Esophagus muscularis mucosa (tissue), 4 donors: ENCODE measurements at regions of chr7 and their contacts with region 1.

Region 1: GRCh38 chr7:151626422-151627115 is 106.9 kb upstream of the RHEB start:
- DNase-seq: no peak
- H3K4me3 ChIP-seq: no peak overlapping the region
- H3K27ac ChIP-seq: peak overlapping the region in 1 of 4 donors; percentile 93
- H3K4me1 ChIP-seq: peaks cover 20 to 81% (median 71%) of the 10 kb centered on the region in 4 donors
- H3K27me3 ChIP-seq: no peaks in the 10 kb centered on the region
- CTCF ChIP-seq: peak; percentile 40 to 59 (median 50)
- EP300 ChIP-seq: no peak
- POLR2A ChIP-seq: no peak

Region 2: DNA sequence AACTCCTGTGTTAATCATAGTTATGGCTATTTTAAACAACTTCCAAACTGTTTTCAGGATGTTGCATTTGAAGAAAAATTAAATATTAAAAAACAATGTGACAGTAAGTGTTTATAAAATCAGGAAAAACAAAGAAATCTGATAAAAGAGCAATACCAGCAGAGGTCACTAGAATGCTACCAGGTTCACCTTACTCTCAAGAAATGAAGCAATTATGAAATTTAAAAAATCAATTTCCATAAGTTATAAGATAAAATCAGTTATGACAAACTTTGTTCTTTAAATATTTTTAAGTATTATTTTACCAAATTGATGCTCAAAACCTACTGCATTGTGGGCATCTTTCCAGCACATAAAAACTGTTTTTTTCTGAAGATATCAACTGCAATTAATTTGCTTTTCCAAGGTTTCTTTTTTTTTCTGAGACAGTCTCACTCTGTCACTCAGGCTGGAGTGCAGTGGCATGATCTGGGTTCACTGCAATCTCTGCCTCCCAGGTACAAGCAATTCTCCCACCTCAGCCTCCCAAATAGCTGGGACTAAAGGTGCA is 56.1 kb before region 1 on chr7:
- intact Hi-C with region 1: no loop called
- DNase-seq: no peak
- H3K4me3 ChIP-seq: no peak overlapping the region
- H3K27ac ChIP-seq: no peak overlapping the region
- H3K4me1 ChIP-seq: peaks cover 5 to 24% (median 17%) of the 10 kb centered on the region in 4 donors
- H3K27me3 ChIP-seq: no peaks in the 10 kb centered on the region
- CTCF ChIP-seq: peak; percentile 37 to 50 (median 50)
- EP300 ChIP-seq: no peak
- POLR2A ChIP-seq: no peak

Region 3: GRCh38 chr7:151599401-151600227 is 27.0 kb before region 1 on chr7:
- intact Hi-C with region 1: loop called (anchors 2 kb)
- DNase-seq: no peak
- H3K4me3 ChIP-seq: peak overlapping the region in 1 of 4 donors; percentile 21
- H3K27ac ChIP-seq: peak overlapping the region; percentile 88 to 91 (median 89)
- H3K4me1 ChIP-seq: peaks cover 21 to 65% (median 60%) of the 10 kb centered on the region in 4 donors
- H3K27me3 ChIP-seq: no peaks in the 10 kb centered on the region
- CTCF ChIP-seq: peak in 1 of 3 experiments; percentile 25
- EP300 ChIP-seq: no peak
- POLR2A ChIP-seq: no peak

Region 4: DNA sequence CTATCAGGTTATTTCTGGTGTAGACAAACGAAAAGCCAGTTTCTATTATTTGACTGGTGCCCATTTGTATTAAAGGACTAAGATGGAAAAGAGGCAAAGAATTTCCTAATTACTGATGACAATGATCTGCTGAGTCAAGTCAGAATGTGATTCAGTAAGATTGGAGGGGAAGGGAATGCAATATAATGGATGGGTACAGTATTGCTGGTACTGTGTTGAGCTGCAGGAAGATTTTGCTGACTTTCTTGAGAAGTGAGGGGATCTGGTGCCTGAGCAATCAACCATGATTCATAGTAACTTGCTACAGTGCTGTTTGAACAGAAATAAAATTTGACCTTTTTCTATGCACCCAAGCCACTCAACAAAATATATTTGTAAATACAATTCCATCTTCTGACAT is 32.2 kb after region 1 on chr7:
- intact Hi-C with region 1: no loop called
- DNase-seq: no peak
- H3K4me3 ChIP-seq: no peak overlapping the region
- H3K27ac ChIP-seq: no peak overlapping the region
- H3K4me1 ChIP-seq: peaks cover 0 to 3% (median 0%) of the 10 kb centered on the region in 4 donors
- H3K27me3 ChIP-seq: no peaks in the 10 kb centered on the region
- CTCF ChIP-seq: no peak
- EP300 ChIP-seq: no peak
- POLR2A ChIP-seq: no peak

Region 5: GRCh38 chr7:151700586-151701165 is 74.1 kb after region 1 on chr7:
- intact Hi-C with region 1: loop called (anchors 5 kb)
- DNase-seq: no peak
- H3K4me3 ChIP-seq: no peak overlapping the region
- H3K27ac ChIP-seq: peak overlapping the region in 2 of 4 donors; percentile 32 to 46
- H3K4me1 ChIP-seq: peaks cover 28 to 42% (median 34%) of the 10 kb centered on the region in 4 donors
- H3K27me3 ChIP-seq: no peaks in the 10 kb centered on the region
- CTCF ChIP-seq: no peak
- EP300 ChIP-seq: no peak
- POLR2A ChIP-seq: no peak